GM10248 (cell line): ENCODE measurements at regions of chr7 and their contacts with region 1.

Region 1: GRCh38 chr7:3042861-3043489 is 692 bp downstream of the CARD11 start:
- DNase-seq: peak; percentile 79
- CTCF ChIP-seq: no peak

Region 2: DNA sequence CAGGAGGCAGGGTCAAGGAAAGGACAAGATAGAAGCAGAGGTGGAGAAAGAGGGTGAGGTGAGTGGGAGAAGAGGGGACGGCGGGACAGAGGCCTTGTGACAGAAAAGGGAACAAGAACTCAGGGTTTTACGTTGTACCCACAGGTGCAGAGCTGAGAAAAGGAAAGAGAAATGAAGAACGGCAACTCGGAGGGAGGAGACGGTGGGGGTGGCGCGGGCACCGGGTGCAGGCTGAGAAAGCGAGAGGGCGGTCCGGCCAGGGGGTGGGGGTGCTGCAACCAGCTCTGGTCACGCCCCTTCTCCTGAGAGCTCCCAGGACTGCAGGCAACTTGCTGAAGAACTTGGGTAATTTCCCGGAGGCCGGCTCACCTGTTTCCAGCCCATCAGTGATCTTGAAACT is 64.6 kb before region 1 on chr7:
- CTCF ChIA-PET with region 1: no interaction called
- POLR2A ChIA-PET with region 1: interaction called, 10 read pairs
- DNase-seq: peak; percentile 87
- CTCF ChIP-seq: no peak

Region 3: GRCh38 chr7:3867863-3868262 is 824.9 kb after region 1 on chr7:
- CTCF ChIA-PET with region 1: no interaction called
- POLR2A ChIA-PET with region 1: no interaction called
- DNase-seq: no peak
- CTCF ChIP-seq: no peak